H1 (cell line): ENCODE measurements at regions of chr17 and their contacts with region 1.

Region 1: GRCh38 chr17:39621523-39622379 is 5.0 kb upstream of the PPP1R1B start:
- DNase-seq: peak in 1 of 2 experiments; percentile 100
- H3K4me3 ChIP-seq: no peak overlapping the region
- H3K27ac ChIP-seq: no peak overlapping the region
- H3K4me1 ChIP-seq: peaks cover 0 to 20% (median 14%) of the 10 kb centered on the region in 4 experiments; a peak in 6 of 7 replicates
- H3K27me3 ChIP-seq: peaks cover 18 to 53% (median 50%) of the 10 kb centered on the region in 4 experiments
- CTCF ChIP-seq: peak; percentile 100
- EP300 ChIP-seq: peak in 1 of 2 experiments; percentile 49; a peak in 1 of 3 replicates
- POLR2A ChIP-seq: no peak
- RAD21 ChIP-seq: peak; percentile 96 to 97

Region 2: GRCh38 chr17:39380144-39380543 is 241.6 kb before region 1 on chr17:
- CTCF ChIA-PET with region 1: no interaction called
- POLR2A ChIA-PET with region 1: no interaction called
- DNase-seq: no peak
- H3K4me3 ChIP-seq: no peak overlapping the region
- H3K27ac ChIP-seq: no peak overlapping the region
- H3K4me1 ChIP-seq: no peaks in the 10 kb centered on the region
- H3K27me3 ChIP-seq: no peaks in the 10 kb centered on the region
- CTCF ChIP-seq: no peak
- EP300 ChIP-seq: no peak
- POLR2A ChIP-seq: no peak
- RAD21 ChIP-seq: no peak

Region 3: DNA sequence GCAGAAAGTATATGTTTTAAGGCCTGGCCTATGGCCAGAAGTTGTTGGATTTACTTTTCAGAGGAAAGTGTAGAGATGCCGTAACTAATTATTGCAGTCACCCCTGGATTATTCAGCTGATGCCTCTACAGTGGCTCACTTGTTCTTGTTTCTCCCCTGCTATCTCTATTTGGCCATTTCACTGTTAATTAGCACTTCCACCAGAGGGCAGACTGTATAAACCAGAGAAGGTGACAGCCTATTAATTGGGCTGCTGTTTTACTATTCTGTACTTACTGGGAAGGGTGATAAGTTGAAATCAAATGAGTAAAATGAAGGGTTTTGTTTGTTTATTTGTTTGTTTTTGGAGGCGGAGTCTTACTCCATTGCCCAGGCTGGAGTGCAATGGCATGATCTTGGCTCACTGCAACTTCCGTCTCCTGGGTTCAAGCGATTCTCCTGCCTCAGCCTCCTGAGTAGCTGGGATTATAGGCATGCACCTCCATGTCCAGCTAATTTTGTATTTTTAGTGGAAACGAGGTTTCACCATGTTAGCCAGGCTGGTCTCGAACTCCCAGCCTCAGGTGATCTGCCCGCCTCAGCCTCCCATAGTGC is 94.4 kb before region 1 on chr17:
- CTCF ChIA-PET with region 1: interaction called, 17 read pairs
- POLR2A ChIA-PET with region 1: no interaction called
- DNase-seq: no peak
- H3K4me3 ChIP-seq: no peak overlapping the region
- H3K27ac ChIP-seq: no peak overlapping the region
- H3K4me1 ChIP-seq: no peaks in the 10 kb centered on the region
- H3K27me3 ChIP-seq: no peaks in the 10 kb centered on the region
- CTCF ChIP-seq: peak in 2 of 3 experiments; percentile 38 to 68; a peak in 2 of 4 replicates
- EP300 ChIP-seq: no peak
- POLR2A ChIP-seq: no peak
- RAD21 ChIP-seq: peak; percentile 30 to 42; a peak in 3 of 4 replicates

Region 4: GRCh38 chr17:39573447-39574298 is 48.1 kb before region 1 on chr17:
- CTCF ChIA-PET with region 1: interaction called, 94 read pairs
- POLR2A ChIA-PET with region 1: no interaction called
- DNase-seq: peak in 1 of 2 experiments; percentile 84
- H3K4me3 ChIP-seq: peak overlapping the region; percentile 48 to 85 (median 56)
- H3K27ac ChIP-seq: no peak overlapping the region
- H3K4me1 ChIP-seq: peaks cover 2 to 12% (median 5%) of the 10 kb centered on the region in 4 experiments
- H3K27me3 ChIP-seq: peaks cover 0 to 4% (median 3%) of the 10 kb centered on the region in 4 experiments; a peak in 5 of 7 replicates
- CTCF ChIP-seq: no peak
- EP300 ChIP-seq: peak in 1 of 2 experiments; percentile 50; a peak in 1 of 3 replicates
- POLR2A ChIP-seq: no peak; a peak in 1 of 3 replicates
- RAD21 ChIP-seq: no peak

Region 5: DNA sequence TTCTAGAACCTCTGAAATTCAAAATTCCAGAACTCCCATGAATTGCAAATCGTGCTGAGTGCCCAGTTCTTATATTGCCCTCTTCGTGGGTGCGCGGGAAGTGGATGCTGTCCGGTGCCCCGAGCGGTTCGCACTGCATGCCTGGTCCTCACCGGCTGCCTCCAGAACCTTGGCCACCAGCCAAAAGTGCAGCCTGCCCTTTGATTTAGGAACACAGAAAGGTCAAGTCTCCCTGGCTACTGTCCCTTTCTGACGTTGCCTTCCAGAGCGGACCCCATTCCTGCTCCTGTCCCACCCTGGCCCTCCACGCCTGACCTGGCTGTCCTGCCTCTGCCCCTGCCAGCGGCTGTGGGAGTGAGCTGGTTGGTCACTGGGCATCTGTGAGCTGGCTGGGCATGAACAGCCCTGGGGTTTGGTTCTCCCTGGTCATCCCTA is 23.7 kb before region 1 on chr17:
- CTCF ChIA-PET with region 1: interaction called, 140 read pairs
- POLR2A ChIA-PET with region 1: interaction called, 4 read pairs
- DNase-seq: peak in 1 of 2 experiments; percentile 52
- H3K4me3 ChIP-seq: no peak overlapping the region
- H3K27ac ChIP-seq: no peak overlapping the region
- H3K4me1 ChIP-seq: peaks cover 5 to 39% (median 30%) of the 10 kb centered on the region in 4 experiments
- H3K27me3 ChIP-seq: peaks cover 78 to 100% (median 97%) of the 10 kb centered on the region in 4 experiments
- CTCF ChIP-seq: no peak
- EP300 ChIP-seq: no peak
- POLR2A ChIP-seq: no peak
- RAD21 ChIP-seq: no peak

Region 6: DNA sequence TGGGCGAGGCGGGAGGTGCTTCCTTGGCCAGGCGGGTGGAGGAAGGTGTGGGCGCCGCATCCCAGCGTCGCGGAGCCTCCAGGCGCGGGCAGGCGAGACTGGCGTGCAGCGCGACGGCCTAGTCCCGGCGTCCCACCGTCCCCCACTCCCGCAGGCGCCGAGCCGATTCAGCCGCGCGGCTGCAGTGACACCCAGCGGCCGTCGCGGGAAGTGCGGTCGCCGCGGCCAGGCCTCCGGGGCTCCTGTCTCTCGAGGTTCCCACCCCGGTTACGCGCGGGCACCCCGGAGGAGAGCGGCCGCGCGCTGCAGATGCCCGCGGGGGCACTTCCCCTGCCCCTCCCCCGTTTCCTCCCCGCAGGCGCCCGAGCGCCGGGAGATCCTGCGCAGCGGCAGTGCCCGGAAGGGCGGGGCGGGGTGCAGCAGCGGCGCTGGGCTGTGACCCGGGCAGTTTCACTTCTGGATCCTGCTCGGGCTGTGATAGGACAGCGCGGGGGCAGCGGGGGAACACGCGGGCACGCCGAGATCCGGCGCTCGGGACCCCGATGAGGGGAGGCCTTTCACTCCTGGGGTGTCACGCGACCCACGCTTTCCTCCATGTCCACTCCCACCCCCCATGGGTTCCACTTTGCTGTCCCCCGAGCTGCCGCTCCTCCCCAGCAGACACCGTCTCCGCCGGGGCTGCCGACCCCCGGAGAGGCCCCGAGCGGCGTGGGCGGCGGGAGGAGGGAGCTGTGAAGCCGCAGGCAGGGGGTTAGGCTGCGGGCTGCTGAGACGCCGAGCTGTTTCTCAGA is 132.6 kb after region 1 on chr17:
- CTCF ChIA-PET with region 1: interaction called, 102 read pairs
- POLR2A ChIA-PET with region 1: interaction called, 3 read pairs
- DNase-seq: peak in 1 of 2 experiments; percentile 96
- H3K4me3 ChIP-seq: peak overlapping the region; percentile 30 to 82 (median 74)
- H3K27ac ChIP-seq: no peak overlapping the region
- H3K4me1 ChIP-seq: peaks cover 9 to 29% (median 21%) of the 10 kb centered on the region in 4 experiments
- H3K27me3 ChIP-seq: peaks cover 0 to 3% (median 2%) of the 10 kb centered on the region in 4 experiments; a peak in 2 of 7 replicates
- CTCF ChIP-seq: peak; percentile 81 to 89 (median 89)
- EP300 ChIP-seq: no peak
- POLR2A ChIP-seq: 0 out of 3 replicates have a peak, but pooled peaks of 1 of the 2 experiments have one; percentile 32
- RAD21 ChIP-seq: peak; percentile 89 to 92

Region 7: DNA sequence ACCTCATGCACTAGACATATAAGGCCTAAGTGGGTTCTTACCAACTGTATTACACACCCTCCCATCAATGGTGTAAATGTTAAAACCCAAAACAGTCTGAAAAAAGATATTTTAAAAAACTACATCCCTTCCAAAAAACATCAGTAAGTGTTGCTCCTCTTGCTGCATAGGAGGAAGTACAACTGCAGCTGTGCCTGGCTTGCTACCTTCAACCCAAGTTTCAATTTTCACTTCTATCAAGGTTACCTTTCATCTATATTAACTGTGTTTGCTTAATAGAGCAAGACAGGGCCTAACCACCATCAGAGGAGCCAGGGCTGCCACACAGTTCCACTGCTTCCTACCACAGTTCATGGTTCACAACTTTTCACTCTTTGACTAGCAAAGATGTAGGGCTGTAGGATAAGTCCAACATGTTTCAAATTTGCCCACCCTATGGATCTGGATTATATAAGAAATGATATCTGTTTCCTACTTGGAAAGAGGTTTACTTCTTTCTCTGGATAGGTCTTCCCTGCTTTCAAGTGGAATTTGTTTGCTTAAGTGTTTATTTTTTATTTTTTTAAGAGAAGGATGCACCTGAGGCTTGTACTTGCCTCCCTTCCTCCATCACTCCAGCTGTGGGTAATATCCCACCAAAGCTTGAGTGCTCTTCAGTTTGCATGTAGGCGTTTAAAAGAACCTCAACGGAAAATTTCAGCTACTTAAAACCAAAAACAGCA is 172.7 kb after region 1 on chr17:
- CTCF ChIA-PET with region 1: no interaction called
- POLR2A ChIA-PET with region 1: no interaction called
- DNase-seq: no peak
- H3K4me3 ChIP-seq: no peak overlapping the region
- H3K27ac ChIP-seq: no peak overlapping the region
- H3K4me1 ChIP-seq: peaks cover 0 to 4% (median 0%) of the 10 kb centered on the region in 4 experiments; a peak in 2 of 7 replicates
- H3K27me3 ChIP-seq: no peaks in the 10 kb centered on the region
- CTCF ChIP-seq: no peak
- EP300 ChIP-seq: no peak
- POLR2A ChIP-seq: no peak
- RAD21 ChIP-seq: no peak